ENCODE measurements at regions of chr3 and their contacts with region 1.

Region 1: GRCh38 chr3:146817704-146818103 is 212.6 kb upstream of the PLSCR5 start:
- DNase-seq: no peak
- ATAC-seq: no peak
- H3K4me3 ChIP-seq: no peak overlapping the region
- H3K27ac ChIP-seq: no peak overlapping the region
- H3K4me1 ChIP-seq: no peaks in the 10 kb centered on the region
- H3K27me3 ChIP-seq: no peaks in the 10 kb centered on the region

Region 2: GRCh38 chr3:146262371-146263110 is 555.2 kb before region 1 on chr3:
- intact Hi-C with region 1: no loop called
- DNase-seq: no peak
- ATAC-seq: no peak
- H3K4me3 ChIP-seq: no peak overlapping the region
- H3K27ac ChIP-seq: no peak overlapping the region
- H3K4me1 ChIP-seq: no peaks in the 10 kb centered on the region
- H3K27me3 ChIP-seq: no peaks in the 10 kb centered on the region

Region 3: GRCh38 chr3:147184794-147185193 is 367.1 kb after region 1 on chr3:
- intact Hi-C with region 1: loop called in 1 of 4 experiments (anchors 5 kb)
- DNase-seq: no peak
- ATAC-seq: no peak
- H3K4me3 ChIP-seq: no peak overlapping the region
- H3K27ac ChIP-seq: no peak overlapping the region
- H3K4me1 ChIP-seq: no peaks in the 10 kb centered on the region
- H3K27me3 ChIP-seq: no peaks in the 10 kb centered on the region

Region 4: DNA sequence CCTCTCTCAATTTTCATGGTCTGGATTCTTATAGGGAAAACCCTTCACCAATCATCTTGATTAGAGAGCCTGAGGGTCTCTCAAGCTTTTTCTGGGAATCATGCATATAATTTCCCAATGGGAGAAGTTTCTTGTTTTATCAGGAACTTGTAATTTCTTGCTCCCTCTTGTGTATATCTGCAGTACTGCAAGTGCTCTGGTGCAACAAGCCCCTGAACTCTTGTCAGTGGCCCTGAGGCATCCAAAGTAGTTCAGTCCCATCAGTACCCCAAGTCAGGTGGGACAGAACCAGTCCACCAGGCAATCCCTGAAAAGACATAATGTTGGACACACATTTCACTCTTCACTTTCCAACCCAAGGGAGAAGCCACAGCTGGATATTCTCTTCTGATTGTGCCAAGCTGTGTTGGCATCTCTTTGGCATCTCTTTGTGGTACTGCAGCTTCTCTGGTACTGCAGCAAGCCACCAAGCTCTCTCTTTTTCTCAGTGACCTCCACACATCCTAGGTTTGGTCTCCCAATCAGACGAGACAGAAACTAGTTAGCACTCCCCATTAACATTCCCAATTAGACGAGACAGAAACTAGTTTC is 374.2 kb after region 1 on chr3:
- intact Hi-C with region 1: loop called in 2 of 4 experiments (anchors 5 kb)
- DNase-seq: no peak
- ATAC-seq: no peak
- H3K4me3 ChIP-seq: no peak overlapping the region
- H3K27ac ChIP-seq: no peak overlapping the region
- H3K4me1 ChIP-seq: no peaks in the 10 kb centered on the region
- H3K27me3 ChIP-seq: no peaks in the 10 kb centered on the region